Activated T-helper 2 cell treated with anti-CD3 and anti-CD28 coated beads, Interferon-gamma antibody, Interleukin-2, Interleukin-4, amounts not matched to agents 10 μg/mL and 5 μg/mL and 100 μg/mL, durations not matched to agents 14 hours and 24 hours and 36 hours (primary cell): ENCODE measurements at regions of chr1 and their contacts with region 1.

Region 1: GRCh38 chr1:16366722-16367257 is at the start of gene SZRD1:
- DNase-seq: peak; percentile 95
- H3K4me3 Mint-ChIP-seq: peak within 1 kb of the TSS; percentile 96
- H3K27ac Mint-ChIP-seq: peak within 1 kb of the TSS; percentile 99
- H3K4me1 Mint-ChIP-seq: peaks cover 30% of the 10 kb centered on the region
- H3K27me3 Mint-ChIP-seq: no peaks in the 10 kb centered on the region
- total RNA-seq, gene SZRD1: 198 TPM in 2 replicates

Region 2: DNA sequence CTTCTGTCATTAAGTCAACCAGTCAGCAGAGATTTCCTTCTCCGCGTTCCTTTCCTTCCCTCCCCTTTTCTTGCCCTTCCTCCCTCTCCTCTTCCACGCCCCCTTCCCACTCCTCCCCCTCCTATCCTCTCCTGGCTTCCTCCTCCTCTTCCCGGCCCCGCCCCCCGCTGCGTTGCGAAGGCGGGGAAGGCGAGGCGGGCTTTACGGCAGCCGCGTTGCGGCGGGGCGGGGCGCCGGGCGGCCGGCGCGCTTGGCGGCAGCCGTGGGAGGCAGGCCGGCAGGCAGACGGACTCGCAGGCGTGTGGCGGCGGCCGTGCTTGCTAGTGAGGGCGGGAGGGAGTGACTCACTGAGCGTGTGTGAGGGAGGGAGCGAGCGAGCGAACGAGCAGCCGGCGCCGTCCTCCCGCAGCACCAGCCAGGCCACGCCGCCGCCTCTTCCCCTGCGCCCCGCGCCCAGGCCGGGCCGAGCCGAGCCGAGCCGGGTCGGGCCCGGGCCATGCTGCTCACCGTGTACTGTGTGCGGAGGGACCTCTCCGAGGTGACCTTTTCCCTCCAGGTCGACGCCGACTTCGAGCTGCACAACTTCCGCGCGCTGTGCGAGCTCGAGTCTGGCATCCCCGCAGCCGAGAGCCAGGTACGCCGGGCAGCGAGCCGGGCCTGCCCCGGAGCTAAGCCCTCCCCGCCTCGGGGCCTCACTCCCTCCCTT is 749.5 kb before region 1 on chr1 and contains the start of gene DDI2:
- intact Hi-C with region 1: loop called (anchors 1 kb)
- DNase-seq: peak; percentile 93
- H3K4me3 Mint-ChIP-seq: peak within 1 kb of the TSS; percentile 85
- H3K27ac Mint-ChIP-seq: peak within 1 kb of the TSS; percentile 95
- H3K4me1 Mint-ChIP-seq: peaks cover 30% of the 10 kb centered on the region
- H3K27me3 Mint-ChIP-seq: no peaks in the 10 kb centered on the region
- total RNA-seq, gene DDI2: 46.4 and 47.7 TPM in 2 replicates

Region 3: DNA sequence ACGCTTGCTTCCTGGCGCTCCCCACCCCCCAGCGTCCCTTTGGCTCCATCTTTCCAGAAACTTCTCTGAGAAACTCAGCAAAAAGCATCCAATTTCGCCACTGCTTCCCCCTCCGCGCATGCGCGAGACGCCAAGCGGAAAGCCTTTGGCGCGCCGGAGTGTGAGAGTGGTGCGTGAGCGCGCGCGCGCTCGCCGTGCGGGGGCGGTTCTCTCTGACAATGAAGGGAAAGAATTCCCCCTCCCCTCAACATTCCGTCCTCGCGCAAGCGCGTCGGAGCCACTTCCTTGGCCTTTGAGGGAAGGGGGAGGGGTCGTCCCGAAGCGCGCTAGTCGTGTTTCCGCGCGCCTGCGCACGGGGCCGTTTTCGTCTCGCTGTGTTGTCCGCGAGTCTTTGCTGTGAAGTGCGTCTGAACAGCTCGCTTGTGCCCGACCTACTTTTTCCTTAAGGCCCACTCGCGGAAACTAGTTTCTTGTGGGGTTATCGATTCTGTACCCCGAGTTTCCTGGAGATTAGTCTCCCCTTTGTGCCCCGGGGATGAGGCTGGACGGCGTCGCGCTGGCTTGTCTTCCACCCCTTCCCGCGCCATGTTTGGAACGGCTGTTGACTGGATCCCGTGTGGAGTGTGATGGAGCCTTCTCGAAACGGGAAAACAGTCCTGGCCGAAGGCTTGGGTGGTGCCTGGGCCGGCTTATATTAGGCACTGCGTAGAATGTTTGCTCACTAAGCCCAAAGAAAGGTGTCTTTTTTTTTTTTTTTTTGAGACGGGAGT is 530.9 kb before region 1 on chr1:
- intact Hi-C with region 1: loop called (anchors 1 kb)
- DNase-seq: peak; percentile 98
- H3K4me3 Mint-ChIP-seq: peak overlapping the region; percentile 88
- H3K27ac Mint-ChIP-seq: peak overlapping the region; percentile 97
- H3K4me1 Mint-ChIP-seq: peaks cover 18% of the 10 kb centered on the region
- H3K27me3 Mint-ChIP-seq: no peaks in the 10 kb centered on the region

Region 4: GRCh38 chr1:16206547-16207317 is 160.1 kb before region 1 on chr1:
- intact Hi-C with region 1: loop called (anchors 1 kb)
- DNase-seq: peak; percentile 93
- H3K4me3 Mint-ChIP-seq: peak overlapping the region; percentile 83
- H3K27ac Mint-ChIP-seq: peak overlapping the region; percentile 93
- H3K4me1 Mint-ChIP-seq: peaks cover 3% of the 10 kb centered on the region
- H3K27me3 Mint-ChIP-seq: no peaks in the 10 kb centered on the region

Region 5: DNA sequence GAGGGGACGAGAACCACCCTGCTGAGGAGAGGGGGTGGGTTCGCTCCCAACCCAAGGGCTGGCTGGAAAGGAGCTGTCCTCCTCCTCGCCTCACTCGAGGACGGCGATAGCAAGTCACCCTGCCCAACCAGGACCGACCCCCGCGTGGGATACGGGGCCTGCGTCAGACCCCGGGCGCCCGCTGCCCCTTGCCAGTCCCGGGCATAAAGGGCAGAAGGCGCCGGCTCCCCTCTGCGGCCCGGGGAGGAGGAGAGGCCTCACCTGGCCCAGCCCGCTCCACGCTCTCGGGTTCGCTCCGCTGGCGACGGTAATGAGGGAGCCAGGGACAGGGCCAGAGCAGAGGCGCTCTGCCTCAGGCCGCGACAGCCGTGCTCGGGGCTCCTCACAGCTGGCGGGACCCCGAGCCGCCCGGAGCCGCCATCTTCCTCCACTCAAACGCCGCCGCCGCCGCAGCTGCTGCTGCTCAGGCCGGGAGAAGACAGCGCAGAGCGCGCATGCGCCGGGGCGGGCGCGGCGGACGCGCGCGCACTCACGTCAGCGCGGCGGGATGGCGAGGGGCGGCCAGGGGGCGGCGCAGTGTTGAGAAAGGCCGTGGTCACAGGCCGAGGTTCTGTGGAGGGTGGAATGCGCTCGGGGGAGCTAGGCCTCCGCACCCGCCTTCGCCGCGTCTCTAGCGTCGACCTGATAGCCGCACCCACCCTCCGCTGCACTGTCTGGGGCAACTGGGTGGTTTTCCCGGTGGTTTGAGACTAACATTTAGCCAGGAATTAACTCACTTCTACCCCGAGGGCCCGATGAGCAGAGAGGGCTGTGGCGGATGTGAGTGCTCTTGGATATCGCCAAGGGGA is 14.6 kb before region 1 on chr1 and contains the start of gene FBXO42:
- intact Hi-C with region 1: loop called (anchors 1 kb)
- DNase-seq: peak; percentile 92
- H3K4me3 Mint-ChIP-seq: peak within 1 kb of the TSS; percentile 96
- H3K27ac Mint-ChIP-seq: peak within 1 kb of the TSS; percentile 93
- H3K4me1 Mint-ChIP-seq: peaks cover 26% of the 10 kb centered on the region
- H3K27me3 Mint-ChIP-seq: no peaks in the 10 kb centered on the region
- total RNA-seq, gene FBXO42: 17.9 and 18.5 TPM in 2 replicates

Region 6: DNA sequence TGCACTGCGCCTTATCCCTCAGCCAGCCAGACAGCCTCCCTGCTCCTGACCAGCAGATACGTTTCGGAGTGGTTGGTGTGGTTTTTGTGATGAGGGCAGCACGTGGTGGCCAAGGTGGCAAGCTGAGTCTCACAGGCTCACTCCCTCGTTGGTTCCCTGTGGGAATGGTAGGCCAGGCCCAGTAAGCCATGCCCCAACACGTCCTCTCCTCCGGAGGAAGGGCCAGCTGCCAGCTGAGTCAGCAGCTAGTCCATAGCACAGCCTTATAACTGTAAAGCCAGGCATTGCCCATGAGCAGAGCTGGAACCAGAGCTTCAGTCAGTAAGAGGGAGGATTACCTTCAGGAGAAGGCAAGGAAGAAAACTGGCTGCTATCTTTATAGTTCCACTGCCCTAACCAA is 29.8 kb after region 1 on chr1:
- intact Hi-C with region 1: no loop called
- DNase-seq: no peak
- H3K4me3 Mint-ChIP-seq: no peak overlapping the region
- H3K27ac Mint-ChIP-seq: no peak overlapping the region
- H3K4me1 Mint-ChIP-seq: peaks cover 22% of the 10 kb centered on the region
- H3K27me3 Mint-ChIP-seq: no peaks in the 10 kb centered on the region

Region 7: DNA sequence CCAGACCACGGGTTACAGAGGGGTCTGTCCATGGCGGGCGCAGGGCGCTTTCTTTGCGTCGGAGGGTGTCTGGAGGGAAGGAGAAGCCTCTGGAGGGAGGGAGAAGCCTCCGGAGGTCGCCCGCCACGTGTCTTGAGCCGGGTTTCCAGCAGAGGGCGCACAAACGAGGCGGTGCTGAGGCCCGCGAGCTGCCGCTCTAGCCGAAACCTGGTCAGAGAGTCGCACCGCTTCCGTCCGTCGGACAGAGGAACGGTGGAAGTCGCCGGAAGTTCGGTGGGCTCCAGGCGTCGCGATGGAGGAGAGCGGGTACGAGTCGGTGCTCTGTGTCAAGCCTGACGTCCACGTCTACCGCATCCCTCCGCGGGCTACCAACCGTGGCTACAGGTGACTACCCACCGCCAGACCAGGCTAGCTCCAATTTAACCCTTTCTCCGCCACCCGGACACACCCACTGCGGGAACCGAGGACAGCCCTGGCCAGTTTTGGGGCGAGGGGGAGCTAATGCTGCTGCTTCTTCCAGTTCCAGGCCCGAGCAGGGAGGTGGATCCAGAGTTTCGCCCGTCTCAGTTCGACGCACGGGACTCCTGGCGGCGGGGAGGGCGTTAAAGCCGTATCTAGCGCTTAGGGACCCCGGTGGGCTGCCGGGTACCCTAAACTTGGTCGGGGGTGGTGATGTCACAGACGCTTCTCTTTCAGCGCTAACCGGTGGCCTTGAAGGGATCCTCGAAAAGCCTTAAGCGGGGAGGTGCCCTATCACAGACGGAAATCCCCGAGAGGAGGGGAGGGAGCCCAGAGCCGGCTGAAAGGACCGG is 73.9 kb after region 1 on chr1 and contains the start of gene NECAP2:
- intact Hi-C with region 1: loop called (anchors 1 kb)
- DNase-seq: peak; percentile 88
- H3K4me3 Mint-ChIP-seq: peak within 1 kb of the TSS; percentile 89
- H3K27ac Mint-ChIP-seq: peak within 1 kb of the TSS; percentile 84
- H3K4me1 Mint-ChIP-seq: peaks cover 22% of the 10 kb centered on the region
- H3K27me3 Mint-ChIP-seq: no peaks in the 10 kb centered on the region
- total RNA-seq, gene NECAP2: 75.2 and 79.4 TPM in 2 replicates